Caco-2 (cell line): ENCODE measurements at regions of chr7 and their contacts with region 1.

Region 1: GRCh38 chr7:12211054-12211710 is at the start of gene TMEM106B:
- DNase-seq: peak; percentile 97 to 98
- H3K4me3 ChIP-seq: peak within 1 kb of the TSS; percentile 76
- H3K4me3 Mint-ChIP-seq: peak within 1 kb of the TSS; percentile 90
- H3K27ac Mint-ChIP-seq: peak within 1 kb of the TSS; percentile 92
- H3K4me1 ChIP-seq: peaks cover 4% of the 10 kb centered on the region; the same call in 1 of the 2 replicates
- H3K4me1 Mint-ChIP-seq: peaks cover 7% of the 10 kb centered on the region
- H3K27me3 ChIP-seq: no peaks in the 10 kb centered on the region
- H3K27me3 Mint-ChIP-seq: no peaks in the 10 kb centered on the region
- CTCF ChIP-seq: peak in 1 of 2 experiments; percentile 35
- total RNA-seq, gene TMEM106B: 38.6 and 46.8 TPM in 2 replicates

Region 2: DNA sequence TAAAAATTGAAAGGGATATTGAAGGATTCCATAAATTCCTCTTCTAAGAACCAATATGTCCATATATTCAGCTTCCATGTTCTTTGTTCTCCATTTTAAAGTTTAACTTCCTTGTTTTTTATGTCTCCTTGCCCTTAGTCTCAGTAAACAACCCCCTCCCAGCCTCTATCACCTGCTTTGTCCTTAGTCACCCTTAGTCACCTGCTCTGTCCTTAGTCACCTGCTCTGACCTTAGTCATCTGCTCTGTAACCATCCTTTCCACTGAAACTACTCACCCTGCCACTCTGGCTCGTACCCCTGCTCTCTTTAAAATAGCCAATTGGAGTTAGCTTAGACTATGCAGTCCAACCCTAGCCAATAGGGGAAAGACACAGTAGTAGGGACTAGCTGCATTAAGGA is 136.3 kb before region 1 on chr7:
- CTCF ChIA-PET with region 1: no interaction called
- POLR2A ChIA-PET with region 1: no interaction called
- intact Hi-C with region 1: loop called (anchors 2 kb)
- DNase-seq: no peak
- H3K4me3 ChIP-seq: no peak overlapping the region
- H3K4me3 Mint-ChIP-seq: no peak overlapping the region
- H3K27ac Mint-ChIP-seq: no peak overlapping the region
- H3K4me1 ChIP-seq: 0 out of 2 replicates have a peak, but pooled peaks cover 4% of the 10 kb centered on the region
- H3K4me1 Mint-ChIP-seq: no peaks in the 10 kb centered on the region
- H3K27me3 ChIP-seq: no peaks in the 10 kb centered on the region
- H3K27me3 Mint-ChIP-seq: no peaks in the 10 kb centered on the region
- CTCF ChIP-seq: no peak

Region 3: DNA sequence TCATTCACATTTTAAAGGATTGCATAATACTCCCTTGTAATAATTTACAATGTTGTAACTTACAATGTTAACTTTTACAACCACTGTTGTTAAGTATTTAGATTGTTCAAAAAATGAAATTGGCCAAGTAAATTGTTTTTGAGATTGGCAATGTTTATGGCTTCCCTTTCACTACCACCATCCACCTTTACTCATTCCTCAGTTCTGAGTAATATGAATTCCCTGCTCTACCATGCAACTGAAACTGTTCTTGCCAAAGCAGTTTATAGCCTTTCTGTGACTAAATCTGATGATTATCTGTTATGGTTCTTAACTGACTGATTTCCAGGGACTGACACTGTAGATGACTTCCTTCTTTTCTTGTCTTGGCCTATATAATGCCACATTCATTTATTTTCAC is 80.5 kb before region 1 on chr7:
- CTCF ChIA-PET with region 1: no interaction called
- POLR2A ChIA-PET with region 1: no interaction called
- intact Hi-C with region 1: loop called (anchors 2 kb)
- DNase-seq: no peak
- H3K4me3 ChIP-seq: no peak overlapping the region
- H3K4me3 Mint-ChIP-seq: no peak overlapping the region
- H3K27ac Mint-ChIP-seq: no peak overlapping the region
- H3K4me1 ChIP-seq: peaks cover 20% of the 10 kb centered on the region
- H3K4me1 Mint-ChIP-seq: peaks cover 11% of the 10 kb centered on the region
- H3K27me3 ChIP-seq: no peaks in the 10 kb centered on the region
- H3K27me3 Mint-ChIP-seq: no peaks in the 10 kb centered on the region
- CTCF ChIP-seq: no peak

Region 4: DNA sequence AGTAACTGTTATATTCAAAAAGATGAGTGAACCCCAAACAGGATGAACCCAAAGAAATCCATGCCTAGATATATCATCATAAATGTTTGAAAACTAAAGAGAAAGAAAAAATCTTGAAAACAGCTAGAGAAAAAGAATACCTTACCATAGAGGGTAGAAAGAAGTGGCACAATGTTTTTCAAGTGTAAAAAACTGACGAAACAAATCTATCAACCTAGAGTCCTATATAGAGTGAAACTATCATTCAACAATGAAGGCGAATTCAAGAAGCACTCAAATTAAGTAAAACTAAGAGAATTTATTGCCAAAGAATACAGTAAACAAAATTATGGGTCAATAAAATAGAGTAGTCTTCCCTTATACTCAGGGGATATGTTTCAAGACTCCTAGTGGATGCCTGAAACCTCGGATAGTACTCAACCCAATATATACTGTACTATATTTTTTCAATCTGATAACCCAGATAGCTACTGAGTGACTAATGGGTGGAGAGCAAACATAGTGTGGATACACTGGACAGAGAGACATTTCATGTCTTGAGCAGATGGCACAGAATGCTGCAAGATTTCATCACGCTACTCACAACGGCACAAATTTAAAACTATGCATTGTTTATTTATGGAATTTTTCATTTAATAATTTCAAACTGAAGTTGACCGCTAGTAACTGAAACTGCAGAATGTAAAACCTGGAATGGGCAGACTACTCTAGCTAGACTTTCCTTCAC is 52.7 kb before region 1 on chr7:
- CTCF ChIA-PET with region 1: no interaction called
- POLR2A ChIA-PET with region 1: no interaction called
- intact Hi-C with region 1: no loop called
- DNase-seq: no peak
- H3K4me3 ChIP-seq: no peak overlapping the region
- H3K4me3 Mint-ChIP-seq: no peak overlapping the region
- H3K27ac Mint-ChIP-seq: no peak overlapping the region
- H3K4me1 ChIP-seq: no peaks in the 10 kb centered on the region
- H3K4me1 Mint-ChIP-seq: no peaks in the 10 kb centered on the region
- H3K27me3 ChIP-seq: no peaks in the 10 kb centered on the region
- H3K27me3 Mint-ChIP-seq: no peaks in the 10 kb centered on the region
- CTCF ChIP-seq: no peak

Region 5: DNA sequence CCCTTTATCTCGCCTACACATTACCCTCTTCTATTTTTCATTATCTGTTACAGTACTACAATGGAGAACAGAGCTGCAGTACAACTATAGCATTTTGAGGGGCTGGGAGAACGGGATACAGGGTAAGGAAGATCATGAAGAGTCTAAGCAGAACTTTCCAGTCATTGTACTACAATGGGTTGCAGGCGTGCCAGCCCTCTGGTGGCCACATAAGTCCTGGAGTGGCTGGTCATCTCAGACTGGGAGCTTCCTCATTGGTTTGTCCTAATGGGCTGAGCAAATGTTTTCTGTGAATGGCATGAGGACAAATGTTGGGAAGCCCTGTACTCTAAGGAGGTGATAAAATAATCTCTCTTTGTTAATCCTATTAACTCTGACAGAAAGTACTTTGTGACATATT is 32.9 kb after region 1 on chr7:
- CTCF ChIA-PET with region 1: no interaction called
- POLR2A ChIA-PET with region 1: interaction called, 4 read pairs
- intact Hi-C with region 1: loop called (anchors 1 kb)
- DNase-seq: peak; percentile 69 to 71
- H3K4me3 ChIP-seq: no peak overlapping the region
- H3K4me3 Mint-ChIP-seq: no peak overlapping the region
- H3K27ac Mint-ChIP-seq: no peak overlapping the region
- H3K4me1 ChIP-seq: no peaks in the 10 kb centered on the region
- H3K4me1 Mint-ChIP-seq: no peaks in the 10 kb centered on the region
- H3K27me3 ChIP-seq: no peaks in the 10 kb centered on the region
- H3K27me3 Mint-ChIP-seq: no peaks in the 10 kb centered on the region
- CTCF ChIP-seq: peak; percentile 59 to 78

Region 6: GRCh38 chr7:12322284-12322902 is 111.2 kb after region 1 on chr7:
- CTCF ChIA-PET with region 1: interaction called, 13 read pairs
- POLR2A ChIA-PET with region 1: no interaction called
- intact Hi-C with region 1: loop called (anchors 1 kb)
- DNase-seq: peak in 1 of 2 experiments; percentile 10
- H3K4me3 ChIP-seq: no peak overlapping the region
- H3K4me3 Mint-ChIP-seq: no peak overlapping the region
- H3K27ac Mint-ChIP-seq: no peak overlapping the region
- H3K4me1 ChIP-seq: no peaks in the 10 kb centered on the region
- H3K4me1 Mint-ChIP-seq: no peaks in the 10 kb centered on the region
- H3K27me3 ChIP-seq: no peaks in the 10 kb centered on the region
- H3K27me3 Mint-ChIP-seq: no peaks in the 10 kb centered on the region
- CTCF ChIP-seq: peak; percentile 72 to 82